Transverse colon (tissue), 4 donors: ENCODE measurements at regions of chr11 and their contacts with region 1.

Region 1: DNA sequence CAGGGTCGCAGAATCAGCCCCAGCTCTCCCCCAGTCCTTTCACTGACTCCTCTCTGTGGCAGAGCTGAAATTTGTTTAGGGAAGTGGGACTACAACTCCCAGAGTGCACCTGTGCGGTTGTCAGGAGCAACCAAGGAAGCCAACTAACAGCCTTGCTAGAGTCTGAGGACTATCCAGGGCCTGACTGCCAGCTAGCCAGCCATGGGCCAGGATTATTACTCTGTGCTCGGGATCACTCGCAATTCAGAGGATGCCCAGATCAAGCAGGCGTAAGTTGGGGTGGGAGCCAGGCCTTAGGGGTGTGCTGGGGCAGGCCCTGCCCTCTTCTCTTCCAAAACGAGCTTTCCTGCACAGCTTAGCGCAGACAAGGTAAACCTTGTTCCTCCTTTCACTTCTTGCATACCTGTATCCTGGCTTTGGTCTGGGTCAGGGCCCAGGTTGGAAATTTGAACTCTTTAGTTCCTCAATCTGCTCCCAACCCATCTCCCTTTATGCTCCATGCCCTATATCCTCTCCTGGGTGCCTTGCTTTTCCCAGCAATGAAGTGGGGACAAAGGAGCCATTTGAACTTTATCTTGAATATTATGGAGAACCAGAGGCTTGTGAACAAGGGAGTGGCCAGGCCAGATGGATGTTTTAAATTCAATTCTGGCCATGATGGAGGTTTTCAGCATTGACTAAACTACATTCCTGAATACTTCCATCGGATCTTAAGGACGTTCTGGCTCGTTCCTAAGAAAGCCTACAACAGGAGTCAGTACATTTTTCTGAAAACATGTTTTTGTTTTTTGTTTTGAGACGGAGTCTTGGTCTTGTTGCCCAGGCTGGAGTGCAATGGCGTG is at the start of gene DNAJB13:
- DNase-seq: peak; percentile 44
- H3K4me3 ChIP-seq: no peak within 1 kb of the TSS
- H3K27ac ChIP-seq: no peak within 1 kb of the TSS
- H3K4me1 ChIP-seq: no peaks in the 10 kb centered on the region
- H3K27me3 ChIP-seq: no peaks in the 10 kb centered on the region
- CTCF ChIP-seq: no peak
- EP300 ChIP-seq: no peak
- POLR2A ChIP-seq: no peak
- total RNA-seq, gene DNAJB13: not detected

Region 2: DNA sequence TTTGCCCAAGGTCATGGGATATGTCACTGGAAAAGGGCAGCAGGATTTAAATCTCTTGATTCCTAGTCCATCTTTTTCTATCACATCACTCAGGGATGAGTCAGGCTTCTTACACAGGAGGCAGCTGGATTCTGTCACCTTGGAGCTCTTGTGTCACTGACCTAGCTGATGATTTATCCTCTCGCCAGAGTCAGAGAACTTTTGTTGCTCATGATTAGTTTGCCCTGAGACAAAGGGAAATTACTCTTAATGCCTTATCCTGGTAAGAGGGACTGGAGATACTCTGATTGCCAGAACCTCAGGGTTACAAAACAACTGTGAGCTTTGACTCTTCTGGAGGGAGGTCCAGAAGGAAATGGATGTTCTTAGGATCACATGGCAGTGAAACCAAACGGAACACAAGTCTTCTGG is 84.5 kb before region 1 on chr11:
- in situ Hi-C with region 1: no loop called
- intact Hi-C with region 1: no loop called
- DNase-seq: peak; percentile 21
- H3K4me3 ChIP-seq: no peak overlapping the region
- H3K27ac ChIP-seq: peak overlapping the region; percentile 32 to 53 (median 43)
- H3K4me1 ChIP-seq: peaks cover 0 to 37% (median 5%) of the 10 kb centered on the region in 4 donors
- H3K27me3 ChIP-seq: no peaks in the 10 kb centered on the region
- CTCF ChIP-seq: no peak
- EP300 ChIP-seq: no peak
- POLR2A ChIP-seq: no peak

Region 3: DNA sequence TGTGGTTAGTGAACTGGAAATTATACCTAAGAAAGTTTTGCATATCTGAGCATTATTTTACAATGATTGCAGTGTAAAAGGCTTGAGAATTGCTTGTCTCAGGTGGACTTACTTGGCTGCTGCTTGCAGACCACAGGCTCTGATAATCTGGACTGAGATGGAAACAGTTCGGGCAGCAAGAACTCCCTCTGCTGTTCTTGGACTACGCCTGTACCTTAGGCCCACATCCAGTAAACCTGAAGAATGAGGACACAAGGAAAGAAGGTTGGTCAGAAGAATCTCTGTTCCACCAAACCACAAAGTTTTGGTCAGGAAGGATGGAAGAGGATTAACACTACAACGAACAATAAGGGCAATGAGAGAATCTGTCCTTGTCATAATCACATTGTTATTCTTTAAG is 139.6 kb after region 1 on chr11:
- in situ Hi-C with region 1: loop called in 1 of 4 experiments (anchors 25 kb)
- intact Hi-C with region 1: no loop called
- DNase-seq: no peak
- H3K4me3 ChIP-seq: no peak overlapping the region
- H3K27ac ChIP-seq: no peak overlapping the region
- H3K4me1 ChIP-seq: no peaks in the 10 kb centered on the region
- H3K27me3 ChIP-seq: no peaks in the 10 kb centered on the region
- CTCF ChIP-seq: no peak
- EP300 ChIP-seq: no peak
- POLR2A ChIP-seq: no peak

Region 4: GRCh38 chr11:74570266-74571061 is 619.4 kb after region 1 on chr11:
- in situ Hi-C with region 1: loop called in 1 of 4 experiments (anchors 25 kb)
- intact Hi-C with region 1: no loop called
- DNase-seq: peak; percentile 66
- H3K4me3 ChIP-seq: no peak overlapping the region
- H3K27ac ChIP-seq: peak overlapping the region in 3 of 4 donors; percentile 63 to 73 (median 65)
- H3K4me1 ChIP-seq: peaks cover 0 to 34% (median 20%) of the 10 kb centered on the region in 4 donors
- H3K27me3 ChIP-seq: no peaks in the 10 kb centered on the region
- CTCF ChIP-seq: peak; percentile 56 to 87 (median 67)
- EP300 ChIP-seq: no peak
- POLR2A ChIP-seq: no peak